B cell (primary cell): ENCODE measurements at regions of chr7 and their contacts with region 1.

Region 1: DNA sequence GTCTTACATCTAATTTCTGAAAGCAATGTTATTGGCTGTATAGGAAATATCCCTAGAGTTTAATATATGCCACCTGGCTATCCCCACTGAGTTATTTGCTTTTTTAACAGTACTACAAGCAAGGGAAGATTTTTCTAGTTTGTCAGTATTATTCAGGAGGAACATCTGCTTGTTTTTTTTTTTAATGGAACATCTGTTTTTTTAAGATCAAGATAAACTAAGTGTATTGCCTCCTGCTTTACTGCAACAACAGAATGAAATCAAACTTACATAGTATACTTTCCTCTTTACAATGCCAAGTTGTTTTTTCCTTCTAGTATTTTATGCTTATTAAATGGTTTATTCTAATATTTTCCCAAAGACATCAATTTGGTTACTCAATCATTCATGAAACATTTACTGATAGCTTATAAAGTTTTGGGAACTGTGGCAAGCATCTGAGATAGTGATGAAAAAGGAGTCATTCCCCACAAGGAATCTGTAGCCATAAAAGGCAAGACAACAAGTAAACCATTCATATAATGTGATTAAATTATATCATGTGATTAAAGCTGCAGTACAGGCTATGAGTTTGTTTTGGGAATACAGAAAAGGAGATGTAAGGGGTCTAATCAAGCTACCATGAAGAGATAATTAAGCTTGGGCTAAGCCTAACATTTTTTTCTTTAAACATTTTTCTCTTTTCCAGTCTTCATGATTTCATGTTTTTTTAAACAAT is 17.4 kb downstream of the MTPN start:
- DNase-seq: no peak
- ATAC-seq: no peak
- H3K4me3 ChIP-seq: no peak overlapping the region
- H3K4me3 Mint-ChIP-seq: no peak overlapping the region
- H3K27ac ChIP-seq: peak overlapping the region in 1 of 2 donors; percentile 24
- H3K27ac Mint-ChIP-seq: peak overlapping the region; percentile 21
- H3K4me1 ChIP-seq: peaks cover 48 to 83% of the 10 kb centered on the region in 2 donors
- H3K4me1 Mint-ChIP-seq: peaks cover 85% of the 10 kb centered on the region
- H3K27me3 ChIP-seq: no peaks in the 10 kb centered on the region
- H3K27me3 Mint-ChIP-seq: no peaks in the 10 kb centered on the region
- CTCF ChIP-seq: no peak

Region 2: GRCh38 chr7:135930565-135931461 is 29.0 kb before region 1 on chr7:
- CTCF ChIA-PET with region 1: no interaction called
- POLR2A ChIA-PET with region 1: no interaction called
- intact Hi-C with region 1: no loop called
- DNase-seq: no peak
- ATAC-seq: no peak
- H3K4me3 ChIP-seq: no peak overlapping the region
- H3K4me3 Mint-ChIP-seq: no peak overlapping the region
- H3K27ac ChIP-seq: peak overlapping the region in 1 of 2 donors; percentile 46
- H3K27ac Mint-ChIP-seq: no peak overlapping the region
- H3K4me1 ChIP-seq: peaks cover 6 to 21% of the 10 kb centered on the region in 2 donors
- H3K4me1 Mint-ChIP-seq: peaks cover 51% of the 10 kb centered on the region
- H3K27me3 ChIP-seq: no peaks in the 10 kb centered on the region
- H3K27me3 Mint-ChIP-seq: no peaks in the 10 kb centered on the region
- CTCF ChIP-seq: no peak

Region 3: DNA sequence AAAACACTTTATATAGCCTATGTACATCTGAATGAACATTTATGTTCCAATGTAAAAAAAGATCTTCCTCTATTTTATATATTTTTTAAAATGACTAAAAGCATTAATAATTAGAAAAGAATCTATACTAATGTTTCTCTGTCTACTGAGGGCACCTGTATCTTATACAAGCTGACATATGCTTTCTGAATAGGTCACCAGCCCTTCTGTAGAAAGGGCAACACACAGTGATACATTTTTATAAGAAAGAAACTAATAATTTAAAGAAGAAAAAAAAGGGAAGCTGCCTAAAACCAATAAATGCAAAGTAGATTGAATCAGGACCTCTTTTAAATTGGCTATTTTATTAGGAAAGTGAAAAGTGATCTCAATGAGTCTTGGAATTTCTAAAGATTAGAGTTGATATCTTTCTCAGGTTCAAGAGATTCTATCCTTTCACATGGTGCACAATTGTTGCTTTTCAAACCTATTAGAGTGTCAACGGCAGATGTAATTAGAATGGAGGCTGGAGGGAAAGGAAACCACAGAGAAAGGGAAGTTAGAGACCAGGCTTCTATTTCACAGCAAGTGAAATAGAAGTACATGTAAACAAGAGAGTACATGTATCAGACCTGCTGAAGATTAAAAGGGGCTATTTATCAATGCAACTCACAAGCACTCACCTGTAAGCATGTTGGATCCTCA is 11.0 kb after region 1 on chr7:
- CTCF ChIA-PET with region 1: interaction called, 3 read pairs
- POLR2A ChIA-PET with region 1: no interaction called
- intact Hi-C with region 1: loop called (anchors 1 kb)
- DNase-seq: peak; percentile 78
- ATAC-seq: peak; percentile 81
- H3K4me3 ChIP-seq: peak overlapping the region; percentile 5 to 89 (median 31)
- H3K4me3 Mint-ChIP-seq: peak overlapping the region; percentile 65
- H3K27ac ChIP-seq: peak overlapping the region; percentile 39 to 92
- H3K27ac Mint-ChIP-seq: peak overlapping the region; percentile 82
- H3K4me1 ChIP-seq: peaks cover 71 to 85% of the 10 kb centered on the region in 2 donors
- H3K4me1 Mint-ChIP-seq: peaks cover 88% of the 10 kb centered on the region
- H3K27me3 ChIP-seq: no peaks in the 10 kb centered on the region
- H3K27me3 Mint-ChIP-seq: no peaks in the 10 kb centered on the region
- CTCF ChIP-seq: no peak

Region 4: GRCh38 chr7:135993950-135994349 is 34.1 kb after region 1 on chr7:
- CTCF ChIA-PET with region 1: no interaction called
- POLR2A ChIA-PET with region 1: no interaction called
- intact Hi-C with region 1: loop called (anchors 5 kb)
- DNase-seq: peak; percentile 33
- ATAC-seq: no peak
- H3K4me3 ChIP-seq: peak overlapping the region in 2 of 5 experiments; percentile 1 to 12
- H3K4me3 Mint-ChIP-seq: peak overlapping the region; percentile 16
- H3K27ac ChIP-seq: no peak overlapping the region
- H3K27ac Mint-ChIP-seq: peak overlapping the region; percentile 63
- H3K4me1 ChIP-seq: peaks cover 21 to 22% of the 10 kb centered on the region in 2 donors
- H3K4me1 Mint-ChIP-seq: peaks cover 33% of the 10 kb centered on the region
- H3K27me3 ChIP-seq: no peaks in the 10 kb centered on the region
- H3K27me3 Mint-ChIP-seq: no peaks in the 10 kb centered on the region
- CTCF ChIP-seq: no peak